OCI-LY7 (cell line): ENCODE measurements at regions of chr6 and their contacts with region 1.

Region 1: GRCh38 chr6:19603721-19604120 is 233.4 kb upstream of the ID4 start:
- DNase-seq: no peak
- H3K4me3 ChIP-seq: no peak overlapping the region
- H3K27ac ChIP-seq: no peak overlapping the region
- H3K4me1 ChIP-seq: peaks cover 46% of the 10 kb centered on the region
- CTCF ChIP-seq: no peak

Region 2: DNA sequence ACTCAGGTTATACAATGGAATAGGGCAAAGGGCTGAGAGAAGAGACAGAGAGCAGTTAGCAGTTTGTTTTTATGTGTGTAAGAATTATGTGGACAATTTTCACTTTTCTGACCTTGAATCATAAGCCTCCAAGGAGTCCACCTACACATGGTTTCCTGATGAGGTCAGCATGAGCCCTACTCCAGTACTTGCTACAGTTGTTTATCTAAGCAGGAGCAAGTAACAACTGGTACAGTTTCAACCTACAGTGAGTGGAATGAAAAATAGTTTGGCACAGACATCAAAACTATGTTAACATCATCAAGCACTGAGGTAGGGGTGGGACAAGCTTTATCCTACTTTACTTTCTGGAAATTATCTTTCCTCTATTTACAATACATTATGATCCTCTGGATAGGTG is 193.2 kb before region 1 on chr6:
- CTCF ChIA-PET with region 1: no interaction called
- POLR2A ChIA-PET with region 1: no interaction called
- intact Hi-C with region 1: no loop called
- DNase-seq: no peak
- H3K4me3 ChIP-seq: no peak overlapping the region
- H3K27ac ChIP-seq: no peak overlapping the region
- H3K4me1 ChIP-seq: no peaks in the 10 kb centered on the region
- CTCF ChIP-seq: no peak

Region 3: GRCh38 chr6:19587238-19587942 is 16.3 kb before region 1 on chr6:
- CTCF ChIA-PET with region 1: no interaction called
- POLR2A ChIA-PET with region 1: interaction called, 55 read pairs
- intact Hi-C with region 1: no loop called
- DNase-seq: peak; percentile 85
- H3K4me3 ChIP-seq: peak overlapping the region; percentile 42
- H3K27ac ChIP-seq: peak overlapping the region; percentile 93
- H3K4me1 ChIP-seq: peaks cover 52% of the 10 kb centered on the region
- CTCF ChIP-seq: no peak